Naive thymus-derived CD4-positive, alpha-beta T cell (primary cell): ENCODE measurements at regions of chr9 and their contacts with region 1.

Region 1: DNA sequence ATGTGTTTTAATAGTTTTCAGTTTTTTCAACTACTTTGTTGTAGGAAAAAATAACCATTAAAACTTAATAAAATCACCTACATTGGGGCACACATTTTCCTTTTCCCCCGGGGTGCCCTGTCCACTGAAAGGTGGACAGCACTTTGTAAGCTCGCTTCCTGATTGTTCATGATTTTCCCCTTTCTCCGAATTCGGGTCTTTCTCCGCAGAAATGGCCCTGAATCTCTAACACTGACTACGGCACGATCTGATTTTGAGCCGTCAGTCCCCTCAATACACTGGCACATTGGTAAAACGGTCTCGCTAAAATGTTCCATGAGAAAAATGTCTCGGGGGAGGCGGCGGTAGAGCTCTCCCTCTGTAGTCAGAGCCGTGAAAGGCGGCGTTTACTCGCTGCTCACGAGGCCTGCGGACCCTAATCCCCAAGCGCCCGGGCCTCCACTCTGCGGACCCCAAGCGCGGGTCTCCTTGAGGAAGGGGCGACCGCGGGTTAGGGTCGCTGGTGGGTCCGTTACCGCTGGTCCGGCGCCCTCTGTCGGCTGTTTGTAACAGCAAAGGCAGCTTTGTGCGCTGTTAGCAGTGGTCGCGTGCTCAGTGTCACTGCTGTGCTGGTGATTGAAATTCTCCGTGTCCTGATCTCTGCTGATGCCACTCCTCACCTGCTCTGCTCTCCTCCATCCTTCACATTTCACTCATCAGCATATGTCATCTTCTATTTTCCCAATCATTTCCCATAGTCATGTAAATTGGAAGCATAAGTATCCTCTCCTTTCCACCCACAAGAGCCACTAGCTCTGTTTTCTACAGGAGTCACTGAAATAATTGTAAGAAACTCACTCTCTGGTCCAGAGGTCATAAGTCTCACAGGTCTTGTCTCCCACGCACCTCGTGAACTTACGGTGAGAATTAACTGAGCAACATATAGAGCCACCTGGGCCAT is 10.8 kb upstream of the IFNA2 start:
- DNase-seq: peak; percentile 35 to 65 (median 56)
- ATAC-seq: peak; percentile 83
- H3K4me3 ChIP-seq: peak overlapping the region; percentile 51
- H3K4me3 Mint-ChIP-seq: peak overlapping the region; percentile 39 to 81 (median 74)
- H3K27ac ChIP-seq: no peak overlapping the region
- H3K27ac Mint-ChIP-seq: peak overlapping the region in 1 of 9 donors; percentile 4
- H3K4me1 ChIP-seq: no peaks in the 10 kb centered on the region
- H3K4me1 Mint-ChIP-seq: peaks cover 5 to 13% (median 9%) of the 10 kb centered on the region in 7 donors
- H3K27me3 ChIP-seq: peaks cover 8 to 10% of the 10 kb centered on the region in 2 donors
- H3K27me3 Mint-ChIP-seq: peaks cover 52 to 84% (median 74%) of the 10 kb centered on the region in 5 donors

Region 2: DNA sequence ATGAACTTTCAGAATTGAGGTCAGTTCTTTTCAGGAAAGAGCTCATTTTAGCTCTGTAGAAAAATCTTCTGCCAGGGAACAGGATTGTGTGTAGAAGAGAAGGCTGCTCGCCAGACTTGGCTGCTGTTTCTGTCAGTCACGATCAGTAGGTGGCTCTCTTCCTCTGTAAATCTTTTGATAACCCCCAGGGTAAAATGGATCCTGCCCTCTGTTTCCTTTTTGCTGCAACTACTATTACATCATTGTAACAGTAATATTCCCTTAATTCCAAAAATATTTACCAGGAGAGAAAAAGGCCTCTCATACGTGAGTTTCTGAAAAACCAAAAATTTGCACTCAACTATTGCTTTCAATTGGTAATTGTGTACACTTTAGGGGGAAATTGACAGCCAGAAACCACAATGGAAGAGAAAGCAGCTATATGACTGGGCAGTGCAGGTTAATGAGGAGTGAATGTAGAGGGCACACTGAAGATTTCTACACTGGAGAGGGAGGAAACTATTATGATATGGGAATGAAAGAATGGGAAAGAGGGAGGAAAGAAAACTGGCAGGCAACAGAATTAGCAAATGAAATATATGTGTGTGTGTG is 241.9 kb before region 1 on chr9:
- CTCF ChIA-PET with region 1: interaction called, 5 read pairs
- POLR2A ChIA-PET with region 1: no interaction called
- intact Hi-C with region 1: loop called in 1 of 2 experiments (anchors 1 kb)
- DNase-seq: peak in 4 of 9 donors; percentile 2 to 23 (median 2)
- ATAC-seq: peak; percentile 58
- H3K4me3 ChIP-seq: no peak overlapping the region
- H3K4me3 Mint-ChIP-seq: no peak overlapping the region
- H3K27ac ChIP-seq: no peak overlapping the region
- H3K27ac Mint-ChIP-seq: no peak overlapping the region
- H3K4me1 ChIP-seq: no peaks in the 10 kb centered on the region
- H3K4me1 Mint-ChIP-seq: peaks cover 2 to 23% (median 3%) of the 10 kb centered on the region in 7 donors
- H3K27me3 ChIP-seq: no peaks in the 10 kb centered on the region
- H3K27me3 Mint-ChIP-seq: peaks cover 0 to 33% (median 3%) of the 10 kb centered on the region in 5 donors

Region 3: GRCh38 chr9:21239911-21240310 is 156.1 kb before region 1 on chr9 and contains the start of gene IFNA14:
- CTCF ChIA-PET with region 1: interaction called, 4 read pairs
- POLR2A ChIA-PET with region 1: no interaction called
- intact Hi-C with region 1: loop called in 1 of 2 experiments (anchors 1 kb)
- DNase-seq: no peak
- ATAC-seq: no peak
- H3K4me3 ChIP-seq: no peak within 1 kb of the TSS
- H3K4me3 Mint-ChIP-seq: no peak within 1 kb of the TSS
- H3K27ac ChIP-seq: no peak within 1 kb of the TSS
- H3K27ac Mint-ChIP-seq: no peak within 1 kb of the TSS
- H3K4me1 ChIP-seq: peaks cover 0 to 5% of the 10 kb centered on the region in 2 donors
- H3K4me1 Mint-ChIP-seq: peaks cover 6 to 19% (median 12%) of the 10 kb centered on the region in 7 donors
- H3K27me3 ChIP-seq: peaks cover 0 to 2% of the 10 kb centered on the region in 2 donors
- H3K27me3 Mint-ChIP-seq: peaks cover 14 to 53% (median 15%) of the 10 kb centered on the region in 5 donors
- total RNA-seq, gene IFNA14: not detected

Region 4: GRCh38 chr9:21252721-21253547 is 143.1 kb before region 1 on chr9:
- CTCF ChIA-PET with region 1: no interaction called
- POLR2A ChIA-PET with region 1: no interaction called
- intact Hi-C with region 1: loop called in 1 of 2 experiments (anchors 1 kb)
- DNase-seq: peak in 5 of 9 donors; percentile 7 to 23 (median 12)
- ATAC-seq: peak; percentile 78
- H3K4me3 ChIP-seq: no peak overlapping the region
- H3K4me3 Mint-ChIP-seq: peak overlapping the region in 6 of 10 donors; percentile 4 to 52 (median 21)
- H3K27ac ChIP-seq: no peak overlapping the region
- H3K27ac Mint-ChIP-seq: no peak overlapping the region
- H3K4me1 ChIP-seq: peaks cover 0 to 3% of the 10 kb centered on the region in 2 donors
- H3K4me1 Mint-ChIP-seq: peaks cover 4 to 14% (median 6%) of the 10 kb centered on the region in 7 donors
- H3K27me3 ChIP-seq: no peaks in the 10 kb centered on the region
- H3K27me3 Mint-ChIP-seq: peaks cover 4 to 60% (median 16%) of the 10 kb centered on the region in 5 donors

Region 5: DNA sequence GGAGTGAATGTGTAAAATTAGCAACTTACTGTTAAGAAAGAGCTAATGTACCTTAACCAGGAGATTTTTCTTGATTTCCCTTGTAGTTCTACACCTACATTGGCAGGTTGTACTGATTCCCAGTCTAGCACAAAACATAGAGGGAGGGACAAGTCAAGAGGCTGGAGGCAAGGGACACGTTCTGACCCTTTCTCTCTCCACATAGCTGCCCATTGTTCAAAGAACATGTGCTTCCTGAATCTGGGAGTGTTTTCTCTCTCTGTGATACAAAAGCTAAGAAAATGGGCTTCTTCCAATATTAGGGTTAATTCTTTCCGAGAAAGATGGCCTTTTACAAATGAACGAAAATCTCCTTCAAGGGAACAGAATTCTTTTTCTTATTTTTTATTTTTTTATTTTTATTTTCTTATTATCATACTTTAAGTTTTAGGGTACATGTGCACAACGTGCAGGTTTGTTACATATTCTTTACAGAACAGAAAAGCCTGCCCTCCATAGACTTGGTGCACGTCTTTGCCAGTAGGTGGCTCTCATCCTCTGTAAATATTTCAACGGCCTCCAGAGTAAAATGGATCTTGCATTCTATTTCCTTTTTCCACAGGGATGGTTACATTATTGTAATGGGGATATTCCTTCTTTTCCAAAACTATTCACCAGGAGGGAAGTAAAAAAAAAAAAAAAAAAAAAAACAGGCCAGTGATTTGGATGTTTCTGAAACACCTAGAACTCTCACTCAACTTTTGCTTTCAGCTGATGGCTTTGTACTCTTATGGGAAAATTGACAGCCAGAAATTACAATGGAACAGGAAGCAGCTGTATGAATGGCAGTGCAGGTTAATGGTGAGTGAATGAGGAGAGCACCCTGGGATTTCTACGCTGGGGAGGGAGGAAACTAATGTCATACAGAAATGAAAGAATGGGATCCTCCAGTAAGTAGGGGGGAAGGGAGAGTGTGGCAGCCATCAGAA is 77.8 kb before region 1 on chr9:
- CTCF ChIA-PET with region 1: interaction called, 8 read pairs
- POLR2A ChIA-PET with region 1: no interaction called
- intact Hi-C with region 1: loop called (anchors 1 to 2 kb)
- DNase-seq: peak in 6 of 9 donors; percentile 16 to 39 (median 28)
- ATAC-seq: peak; percentile 84
- H3K4me3 ChIP-seq: no peak overlapping the region
- H3K4me3 Mint-ChIP-seq: no peak overlapping the region
- H3K27ac ChIP-seq: no peak overlapping the region
- H3K27ac Mint-ChIP-seq: peak overlapping the region in 2 of 9 donors; percentile 54
- H3K4me1 ChIP-seq: no peaks in the 10 kb centered on the region
- H3K4me1 Mint-ChIP-seq: peaks cover 4 to 6% (median 5%) of the 10 kb centered on the region in 7 donors
- H3K27me3 ChIP-seq: no peaks in the 10 kb centered on the region
- H3K27me3 Mint-ChIP-seq: peaks cover 0 to 21% (median 0%) of the 10 kb centered on the region in 5 donors

Region 6: GRCh38 chr9:21357479-21358460 is 38.3 kb before region 1 on chr9:
- CTCF ChIA-PET with region 1: no interaction called
- POLR2A ChIA-PET with region 1: no interaction called
- intact Hi-C with region 1: loop called in 1 of 2 experiments (anchors 2 kb)
- DNase-seq: peak in 6 of 9 donors; percentile 30 to 64 (median 48)
- ATAC-seq: peak; percentile 72
- H3K4me3 ChIP-seq: peak overlapping the region; percentile 18
- H3K4me3 Mint-ChIP-seq: peak overlapping the region; percentile 31 to 79 (median 72)
- H3K27ac ChIP-seq: peak overlapping the region; percentile 68
- H3K27ac Mint-ChIP-seq: peak overlapping the region; percentile 75 to 95 (median 88)
- H3K4me1 ChIP-seq: peaks cover 3 to 6% of the 10 kb centered on the region in 2 donors
- H3K4me1 Mint-ChIP-seq: peaks cover 4 to 27% (median 18%) of the 10 kb centered on the region in 7 donors
- H3K27me3 ChIP-seq: no peaks in the 10 kb centered on the region
- H3K27me3 Mint-ChIP-seq: peaks cover 0 to 67% (median 6%) of the 10 kb centered on the region in 5 donors

Region 7: DNA sequence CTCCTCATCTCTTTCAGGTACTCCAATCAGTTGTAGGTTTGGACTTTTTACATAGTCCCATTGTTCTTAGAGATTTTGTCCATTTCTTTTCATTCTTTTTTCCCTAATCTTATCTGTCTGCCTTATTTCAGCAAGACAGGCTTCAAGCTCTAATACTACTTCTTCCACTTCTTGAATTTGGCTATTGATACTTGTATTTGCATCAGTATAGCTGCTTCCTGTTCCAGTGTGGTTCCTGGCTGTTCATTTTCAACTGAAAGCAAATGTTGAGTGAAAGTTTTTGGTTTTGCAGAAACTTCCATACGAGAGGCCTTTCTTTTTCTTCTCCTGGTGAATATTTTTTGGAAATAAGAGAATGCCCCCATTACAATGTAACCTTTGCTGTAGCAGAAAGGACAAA is 32.2 kb after region 1 on chr9:
- CTCF ChIA-PET with region 1: no interaction called
- POLR2A ChIA-PET with region 1: no interaction called
- intact Hi-C with region 1: no loop called
- DNase-seq: no peak
- ATAC-seq: no peak
- H3K4me3 ChIP-seq: no peak overlapping the region
- H3K4me3 Mint-ChIP-seq: no peak overlapping the region
- H3K27ac ChIP-seq: no peak overlapping the region
- H3K27ac Mint-ChIP-seq: no peak overlapping the region
- H3K4me1 ChIP-seq: no peaks in the 10 kb centered on the region
- H3K4me1 Mint-ChIP-seq: no peaks in the 10 kb centered on the region
- H3K27me3 ChIP-seq: no peaks in the 10 kb centered on the region
- H3K27me3 Mint-ChIP-seq: peaks cover 20 to 76% (median 40%) of the 10 kb centered on the region in 5 donors

Region 8: GRCh38 chr9:21440139-21440538 is 44.1 kb after region 1 on chr9 and contains the start of gene IFNA1:
- CTCF ChIA-PET with region 1: no interaction called
- POLR2A ChIA-PET with region 1: no interaction called
- intact Hi-C with region 1: no loop called
- DNase-seq: no peak
- ATAC-seq: no peak
- H3K4me3 ChIP-seq: no peak within 1 kb of the TSS
- H3K4me3 Mint-ChIP-seq: no peak within 1 kb of the TSS
- H3K27ac ChIP-seq: no peak within 1 kb of the TSS
- H3K27ac Mint-ChIP-seq: no peak within 1 kb of the TSS
- H3K4me1 ChIP-seq: peaks cover 7 to 15% of the 10 kb centered on the region in 2 donors
- H3K4me1 Mint-ChIP-seq: peaks cover 10 to 23% (median 15%) of the 10 kb centered on the region in 7 donors
- H3K27me3 ChIP-seq: no peaks in the 10 kb centered on the region
- H3K27me3 Mint-ChIP-seq: peaks cover 0 to 35% (median 6%) of the 10 kb centered on the region in 5 donors
- total RNA-seq, gene IFNA1: not detected